ENCODE measurements at regions of chr6 and their contacts with region 1.

Region 1: GRCh38 chr6:137944793-137945498 is 77.9 kb downstream of the TNFAIP3 start:
- DNase-seq: peak; percentile 24
- H3K4me3 Mint-ChIP-seq: no peak overlapping the region
- H3K27ac Mint-ChIP-seq: peak overlapping the region; percentile 47
- H3K4me1 Mint-ChIP-seq: peaks cover 40% of the 10 kb centered on the region
- H3K27me3 Mint-ChIP-seq: no peaks in the 10 kb centered on the region

Region 2: GRCh38 chr6:137086031-137086430 is 858.9 kb before region 1 on chr6:
- CTCF ChIA-PET with region 1: no interaction called
- POLR2A ChIA-PET with region 1: no interaction called
- intact Hi-C with region 1: no loop called
- DNase-seq: no peak
- H3K4me3 Mint-ChIP-seq: no peak overlapping the region
- H3K27ac Mint-ChIP-seq: no peak overlapping the region
- H3K4me1 Mint-ChIP-seq: peaks cover 18% of the 10 kb centered on the region
- H3K27me3 Mint-ChIP-seq: peaks cover 8% of the 10 kb centered on the region

Region 3: DNA sequence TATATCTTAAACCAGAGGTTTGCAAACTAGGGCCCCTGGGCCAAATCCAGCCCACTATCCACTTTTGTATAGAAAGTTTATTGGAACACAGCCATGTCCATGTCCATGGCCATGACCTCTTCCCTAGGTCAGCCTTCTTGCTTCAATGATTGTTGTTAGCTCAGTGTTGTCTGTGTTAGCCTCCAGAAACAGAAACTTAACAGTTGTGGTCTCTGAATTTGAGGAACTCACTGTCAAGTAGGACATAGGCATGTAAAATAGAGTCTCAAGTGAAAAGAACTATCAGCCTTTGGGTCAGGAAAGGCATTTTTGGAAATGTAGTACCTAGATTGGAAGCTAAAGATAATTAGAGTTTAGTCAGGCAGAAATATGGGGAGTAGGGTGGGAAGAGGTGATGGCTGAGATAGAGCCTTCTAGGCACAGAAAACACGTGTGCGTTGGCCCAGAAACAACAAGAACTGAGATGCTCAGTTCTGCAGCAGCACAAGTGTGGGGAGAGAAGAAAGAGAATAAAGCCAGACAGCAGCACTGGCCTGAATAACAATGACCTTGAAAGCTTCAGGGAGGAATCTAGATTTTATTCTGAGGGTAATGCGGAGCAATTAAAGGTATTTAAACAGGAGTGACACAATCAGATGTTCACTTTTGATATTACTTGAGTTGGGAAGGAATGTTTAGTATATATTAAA is 363.8 kb before region 1 on chr6:
- CTCF ChIA-PET with region 1: no interaction called
- POLR2A ChIA-PET with region 1: no interaction called
- intact Hi-C with region 1: no loop called
- DNase-seq: no peak
- H3K4me3 Mint-ChIP-seq: no peak overlapping the region
- H3K27ac Mint-ChIP-seq: no peak overlapping the region
- H3K4me1 Mint-ChIP-seq: no peaks in the 10 kb centered on the region
- H3K27me3 Mint-ChIP-seq: peaks cover 2% of the 10 kb centered on the region

Region 4: GRCh38 chr6:137799950-137800568 is 144.9 kb before region 1 on chr6:
- CTCF ChIA-PET with region 1: interaction called, 20 read pairs
- POLR2A ChIA-PET with region 1: no interaction called
- intact Hi-C with region 1: loop called (anchors 1 kb)
- DNase-seq: peak; percentile 72
- H3K4me3 Mint-ChIP-seq: peak overlapping the region; percentile 4
- H3K27ac Mint-ChIP-seq: peak overlapping the region; percentile 69
- H3K4me1 Mint-ChIP-seq: peaks cover 57% of the 10 kb centered on the region
- H3K27me3 Mint-ChIP-seq: no peaks in the 10 kb centered on the region

Region 5: DNA sequence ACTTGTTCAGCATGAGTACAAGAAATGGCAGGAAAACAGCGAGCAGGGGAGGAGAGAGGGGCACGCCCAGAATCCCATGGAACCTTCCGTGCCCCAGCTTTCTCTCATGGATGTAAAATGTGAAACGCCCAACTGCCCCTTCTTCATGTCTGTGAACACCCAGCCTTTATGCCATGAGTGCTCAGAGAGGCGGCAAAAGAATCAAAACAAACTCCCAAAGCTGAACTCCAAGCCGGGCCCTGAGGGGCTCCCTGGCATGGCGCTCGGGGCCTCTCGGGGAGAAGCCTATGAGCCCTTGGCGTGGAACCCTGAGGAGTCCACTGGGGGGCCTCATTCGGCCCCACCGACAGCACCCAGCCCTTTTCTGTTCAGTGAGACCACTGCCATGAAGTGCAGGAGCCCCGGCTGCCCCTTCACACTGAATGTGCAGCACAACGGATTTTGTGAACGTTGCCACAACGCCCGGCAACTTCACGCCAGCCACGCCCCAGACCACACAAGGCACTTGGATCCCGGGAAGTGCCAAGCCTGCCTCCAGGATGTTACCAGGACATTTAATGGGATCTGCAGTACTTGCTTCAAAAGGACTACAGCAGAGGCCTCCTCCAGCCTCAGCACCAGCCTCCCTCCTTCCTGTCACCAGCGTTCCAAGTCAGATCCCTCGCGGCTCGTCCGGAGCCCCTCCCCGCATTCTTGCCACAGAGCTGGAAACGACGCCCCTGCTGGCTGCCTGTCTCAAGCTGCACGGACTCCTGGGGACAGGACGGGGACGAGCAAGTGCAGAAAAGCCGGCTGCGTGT is 66.3 kb before region 1 on chr6:
- CTCF ChIA-PET with region 1: interaction called, 270 read pairs
- POLR2A ChIA-PET with region 1: interaction called, 33 read pairs
- intact Hi-C with region 1: loop called (anchors 1 kb)
- DNase-seq: no peak
- H3K4me3 Mint-ChIP-seq: peak overlapping the region; percentile 51
- H3K27ac Mint-ChIP-seq: peak overlapping the region; percentile 84
- H3K4me1 Mint-ChIP-seq: peaks cover 89% of the 10 kb centered on the region
- H3K27me3 Mint-ChIP-seq: no peaks in the 10 kb centered on the region

Region 6: DNA sequence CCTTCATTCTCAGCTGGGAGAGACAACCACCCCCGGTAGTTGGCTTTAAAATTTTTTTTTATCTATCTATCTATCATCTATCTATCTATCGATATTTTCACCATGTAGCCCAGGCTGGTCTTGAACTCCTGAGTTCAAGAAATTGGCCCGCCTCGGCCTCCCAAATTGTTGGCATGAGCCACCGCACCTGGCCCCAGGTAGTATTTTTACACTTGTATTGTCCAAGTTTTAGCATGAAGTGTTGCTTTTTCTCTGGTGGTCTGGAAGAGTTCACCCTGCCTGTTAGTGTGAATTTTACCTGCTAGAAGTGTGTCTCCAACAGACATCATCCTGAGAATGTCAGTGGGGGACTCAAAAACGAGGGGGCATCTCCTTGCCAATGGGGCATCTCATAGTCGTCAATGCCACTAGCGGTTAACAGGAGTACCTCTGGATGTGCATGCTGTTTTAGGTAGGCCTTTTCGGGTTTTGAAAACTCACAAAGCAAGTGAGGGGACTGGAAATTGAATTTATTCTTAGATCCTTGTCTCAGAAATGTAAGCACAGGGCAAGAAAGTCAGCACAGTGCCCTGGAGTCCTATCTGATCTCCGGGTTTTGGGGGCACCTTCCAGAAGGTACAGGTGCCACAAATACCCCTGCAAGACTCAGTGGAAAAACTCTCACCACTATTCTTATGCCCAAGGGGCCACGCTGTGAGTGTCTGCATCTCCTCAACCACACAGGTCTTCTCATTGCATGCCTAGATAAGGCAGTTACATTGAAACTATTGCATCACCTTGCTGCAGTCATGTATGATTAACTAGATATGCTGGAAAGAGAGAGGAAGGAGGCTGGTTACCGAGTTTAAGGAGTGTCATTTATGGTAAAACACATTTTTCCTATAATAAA is 40.8 kb before region 1 on chr6:
- CTCF ChIA-PET with region 1: interaction called, 9 read pairs
- POLR2A ChIA-PET with region 1: no interaction called
- intact Hi-C with region 1: loop called (anchors 1 kb)
- DNase-seq: peak; percentile 75
- H3K4me3 Mint-ChIP-seq: peak overlapping the region; percentile 71
- H3K27ac Mint-ChIP-seq: peak overlapping the region; percentile 100
- H3K4me1 Mint-ChIP-seq: peaks cover 55% of the 10 kb centered on the region
- H3K27me3 Mint-ChIP-seq: no peaks in the 10 kb centered on the region

Region 7: GRCh38 chr6:137927777-137928218 is 17.1 kb before region 1 on chr6:
- CTCF ChIA-PET with region 1: interaction called, 25 read pairs
- POLR2A ChIA-PET with region 1: interaction called, 7 read pairs
- intact Hi-C with region 1: loop called (anchors 1 kb)
- DNase-seq: peak; percentile 88
- H3K4me3 Mint-ChIP-seq: peak overlapping the region; percentile 65
- H3K27ac Mint-ChIP-seq: peak overlapping the region; percentile 90
- H3K4me1 Mint-ChIP-seq: peaks cover 46% of the 10 kb centered on the region
- H3K27me3 Mint-ChIP-seq: no peaks in the 10 kb centered on the region

Region 8: GRCh38 chr6:137967689-137968454 is 22.9 kb after region 1 on chr6:
- CTCF ChIA-PET with region 1: interaction called, 9 read pairs
- POLR2A ChIA-PET with region 1: interaction called, 3 read pairs
- intact Hi-C with region 1: loop called (anchors 2 kb)
- DNase-seq: no peak
- H3K4me3 Mint-ChIP-seq: no peak overlapping the region
- H3K27ac Mint-ChIP-seq: peak overlapping the region; percentile 72
- H3K4me1 Mint-ChIP-seq: peaks cover 43% of the 10 kb centered on the region
- H3K27me3 Mint-ChIP-seq: no peaks in the 10 kb centered on the region

Region 9: GRCh38 chr6:137975188-137975940 is 30.4 kb after region 1 on chr6:
- CTCF ChIA-PET with region 1: interaction called, 10 read pairs
- POLR2A ChIA-PET with region 1: interaction called, 9 read pairs
- intact Hi-C with region 1: loop called (anchors 1 kb)
- DNase-seq: peak; percentile 38
- H3K4me3 Mint-ChIP-seq: peak overlapping the region; percentile 64
- H3K27ac Mint-ChIP-seq: peak overlapping the region; percentile 84
- H3K4me1 Mint-ChIP-seq: peaks cover 59% of the 10 kb centered on the region
- H3K27me3 Mint-ChIP-seq: no peaks in the 10 kb centered on the region

Region 10: GRCh38 chr6:138063726-138064125 is 118.8 kb after region 1 on chr6:
- CTCF ChIA-PET with region 1: no interaction called
- POLR2A ChIA-PET with region 1: no interaction called
- intact Hi-C with region 1: no loop called
- DNase-seq: no peak
- H3K4me3 Mint-ChIP-seq: no peak overlapping the region
- H3K27ac Mint-ChIP-seq: no peak overlapping the region
- H3K4me1 Mint-ChIP-seq: no peaks in the 10 kb centered on the region
- H3K27me3 Mint-ChIP-seq: peaks cover 6% of the 10 kb centered on the region

Measured in activated CD4-positive, alpha-beta memory T cell treated with anti-CD3 and anti-CD28 coated beads for 36 hours (primary cell).